Right ventricle myocardium inferior (tissue), 1 donor: ENCODE measurements at regions of chr12 and their contacts with region 1.

Region 1: DNA sequence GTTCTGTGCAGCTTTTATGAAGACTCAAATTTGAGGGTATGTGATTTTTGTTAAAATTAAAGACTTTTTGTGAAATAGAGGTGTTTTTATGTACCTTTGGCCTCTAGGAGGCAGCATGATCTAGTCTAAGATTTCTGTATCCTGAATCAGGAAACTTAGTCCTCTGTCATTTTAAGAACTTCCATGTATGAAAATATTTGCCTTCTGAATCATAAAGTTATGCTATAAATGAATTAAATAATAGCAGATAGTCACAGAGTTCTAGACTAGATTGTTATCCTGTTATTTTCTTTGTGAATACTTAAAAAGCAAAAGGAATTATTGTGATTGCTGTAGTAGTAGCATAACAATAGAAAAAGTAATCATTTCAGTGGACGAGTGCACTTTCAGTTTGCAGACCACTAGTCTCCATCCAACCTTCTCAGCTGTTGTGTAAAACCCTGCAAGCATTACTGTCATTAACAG is 56.3 kb downstream of the FGD4 start:
- DNase-seq: no peak
- ATAC-seq: peak; percentile 66

Region 2: DNA sequence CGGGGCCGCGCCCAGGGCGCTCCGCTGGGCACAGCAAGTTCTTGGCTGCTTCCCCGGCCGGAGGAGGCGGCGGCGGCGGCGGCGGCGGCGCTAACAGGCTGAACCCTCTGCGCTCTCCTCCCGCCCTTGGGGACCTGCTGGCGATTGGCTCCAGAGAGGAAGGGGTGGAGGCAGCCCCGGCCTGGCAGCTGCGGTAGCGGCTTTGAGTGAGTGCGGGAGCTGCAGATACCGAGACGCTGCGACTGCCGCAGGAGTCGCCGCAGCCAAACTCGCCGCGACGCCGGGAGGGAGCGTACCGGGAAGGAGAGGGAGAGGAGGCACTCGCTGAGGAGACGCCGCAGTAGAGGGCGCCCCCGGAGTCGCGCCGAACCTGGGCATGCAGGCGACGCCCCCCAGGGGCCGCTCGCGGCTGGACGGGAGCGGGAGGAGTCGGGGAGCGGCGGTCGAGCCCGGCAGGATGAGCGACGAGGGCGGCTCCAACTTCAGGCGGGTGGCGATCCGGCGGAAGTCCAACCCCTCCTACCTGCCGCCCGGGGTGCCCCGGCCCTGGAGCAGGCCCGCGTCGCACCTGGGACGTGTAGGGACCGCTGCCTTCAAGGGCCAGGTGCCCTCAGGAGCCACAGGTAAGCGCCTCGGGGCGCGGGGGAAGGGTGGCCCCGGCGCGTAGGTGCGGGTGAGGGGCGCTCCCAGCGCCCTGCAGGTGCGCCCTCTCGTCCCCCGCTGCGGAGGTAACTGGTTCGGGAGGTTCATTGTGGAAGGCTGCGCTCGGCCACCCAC is 56.1 kb before region 1 on chr12 and contains the start of gene FGD4:
- intact Hi-C with region 1: no loop called
- DNase-seq: peak; percentile 92
- ATAC-seq: peak; percentile 97
- total RNA-seq, gene FGD4: 17.4 TPM

Region 3: DNA sequence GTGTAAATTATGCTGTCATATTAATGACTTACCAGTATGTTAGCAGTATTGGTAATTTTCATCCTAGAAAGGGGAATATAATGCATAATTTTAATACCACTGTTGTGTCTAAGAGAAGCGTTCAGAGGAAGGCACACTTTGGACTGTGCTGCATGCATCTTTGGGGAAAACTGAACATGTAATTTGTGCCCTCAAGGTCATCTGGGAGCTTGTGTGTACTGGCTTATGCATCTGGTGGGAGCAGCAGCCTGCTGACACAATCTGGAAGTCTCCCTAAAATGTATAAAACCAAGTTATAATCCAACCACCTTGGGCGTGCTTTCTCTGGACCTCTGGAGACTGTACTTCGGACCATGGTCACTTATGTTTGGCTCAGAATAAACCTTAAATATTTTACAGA is 42.2 kb before region 1 on chr12:
- intact Hi-C with region 1: no loop called
- DNase-seq: no peak
- ATAC-seq: no peak

Region 4: GRCh38 chr12:32533971-32534590 is 78.4 kb after region 1 on chr12:
- intact Hi-C with region 1: loop called (anchors 2 kb)
- DNase-seq: no peak
- ATAC-seq: peak; percentile 84

Region 5: GRCh38 chr12:32659908-32660440 is 204.3 kb after region 1 on chr12:
- intact Hi-C with region 1: loop called (anchors 2 kb)
- DNase-seq: no peak
- ATAC-seq: no peak

Region 6: GRCh38 chr12:32671930-32672780 is 216.5 kb after region 1 on chr12:
- intact Hi-C with region 1: loop called (anchors 5 kb)
- DNase-seq: no peak
- ATAC-seq: peak; percentile 87